ENCODE measurements at regions of chr15 and their contacts with region 1.

Region 1: GRCh38 chr15:74793135-74794028 is 11.5 kb downstream of the CSK start:
- DNase-seq: no peak
- ATAC-seq: peak; percentile 40
- H3K4me3 Mint-ChIP-seq: no peak overlapping the region
- H3K27ac Mint-ChIP-seq: no peak overlapping the region
- H3K4me1 Mint-ChIP-seq: peaks cover 31% of the 10 kb centered on the region
- H3K27me3 Mint-ChIP-seq: no peaks in the 10 kb centered on the region; the same call in 1 of the 2 replicates
- CTCF ChIP-seq: no peak

Region 2: GRCh38 chr15:74482661-74483060 is 310.7 kb before region 1 on chr15:
- CTCF ChIA-PET with region 1: no interaction called
- POLR2A ChIA-PET with region 1: no interaction called
- DNase-seq: peak; percentile 26
- ATAC-seq: peak; percentile 100
- H3K4me3 Mint-ChIP-seq: no peak overlapping the region
- H3K27ac Mint-ChIP-seq: peak overlapping the region; percentile 83
- H3K4me1 Mint-ChIP-seq: peaks cover 11% of the 10 kb centered on the region
- H3K27me3 Mint-ChIP-seq: no peaks in the 10 kb centered on the region
- CTCF ChIP-seq: no peak

Region 3: DNA sequence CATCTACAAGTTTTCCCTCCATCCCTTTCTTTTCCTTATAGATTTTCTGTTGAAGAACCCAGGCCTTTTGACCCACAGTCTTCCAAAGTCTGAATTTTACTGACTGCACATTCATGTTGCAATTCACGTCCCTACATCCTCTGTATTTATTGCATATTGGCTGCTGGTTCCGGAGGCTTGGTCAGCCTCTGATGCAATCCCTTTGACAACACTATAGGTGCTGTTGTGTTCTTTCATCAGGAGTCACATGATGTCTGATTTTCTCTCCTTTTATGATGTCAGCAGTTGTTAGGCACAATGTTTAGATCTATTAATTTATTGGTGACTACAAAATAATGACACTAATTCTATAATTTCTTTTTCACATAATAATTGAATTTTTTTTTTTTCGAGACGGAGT is 76.7 kb before region 1 on chr15:
- CTCF ChIA-PET with region 1: no interaction called
- POLR2A ChIA-PET with region 1: no interaction called
- DNase-seq: no peak
- ATAC-seq: no peak
- H3K4me3 Mint-ChIP-seq: no peak overlapping the region
- H3K27ac Mint-ChIP-seq: no peak overlapping the region
- H3K4me1 Mint-ChIP-seq: no peaks in the 10 kb centered on the region
- H3K27me3 Mint-ChIP-seq: peaks cover 15% of the 10 kb centered on the region
- CTCF ChIP-seq: no peak

Region 4: GRCh38 chr15:74781431-74782258 is 11.7 kb before region 1 on chr15 and contains the start of gene CSK:
- CTCF ChIA-PET with region 1: interaction called, 360 read pairs
- POLR2A ChIA-PET with region 1: no interaction called
- DNase-seq: peak; percentile 58
- ATAC-seq: peak; percentile 66
- H3K4me3 Mint-ChIP-seq: peak within 1 kb of the TSS; percentile 83
- H3K27ac Mint-ChIP-seq: no peak within 1 kb of the TSS
- H3K4me1 Mint-ChIP-seq: peaks cover 50% of the 10 kb centered on the region
- H3K27me3 Mint-ChIP-seq: peaks cover 26% of the 10 kb centered on the region
- CTCF ChIP-seq: peak; percentile 49; the same call in 1 of the 2 replicates
- total RNA-seq, gene CSK: 55.1 to 55.9 TPM (median 55.3 TPM) in 3 replicates

Region 5: DNA sequence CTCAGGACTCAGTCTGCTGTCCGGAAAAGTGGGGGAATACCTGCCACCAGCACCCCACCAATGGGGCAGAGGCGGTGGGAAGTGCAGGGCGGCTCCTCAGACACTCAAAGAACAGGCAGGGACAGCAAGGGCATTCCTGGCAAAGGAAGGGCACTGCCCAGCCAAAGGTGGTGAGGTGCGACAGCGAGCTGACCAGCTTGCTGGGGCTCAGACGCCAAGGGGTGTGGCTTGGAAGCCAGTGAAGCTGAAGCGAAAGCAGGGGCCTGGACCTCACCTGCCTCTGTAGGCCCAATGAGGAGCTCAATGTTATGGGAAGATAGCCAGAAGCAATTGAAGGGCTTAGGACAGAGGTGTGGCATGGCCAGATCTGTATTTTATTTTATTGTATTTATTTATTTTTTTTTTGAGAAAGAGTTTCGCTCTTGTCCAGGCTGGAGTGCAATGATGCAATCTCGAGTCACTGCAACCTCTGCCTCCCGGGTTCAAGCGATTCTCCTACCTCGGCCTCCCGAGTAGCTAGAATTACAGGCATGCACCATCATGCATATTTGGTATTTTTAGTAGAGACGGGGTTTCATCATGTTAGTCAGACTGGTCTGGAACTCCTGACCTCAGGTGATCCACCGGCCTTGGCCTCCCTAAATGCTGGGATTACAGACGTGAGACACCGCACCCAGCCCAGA is 14.8 kb after region 1 on chr15:
- CTCF ChIA-PET with region 1: interaction called, 40 read pairs
- POLR2A ChIA-PET with region 1: interaction called, 3 read pairs
- DNase-seq: no peak
- ATAC-seq: no peak
- H3K4me3 Mint-ChIP-seq: no peak overlapping the region
- H3K27ac Mint-ChIP-seq: no peak overlapping the region
- H3K4me1 Mint-ChIP-seq: peaks cover 6% of the 10 kb centered on the region
- H3K27me3 Mint-ChIP-seq: no peaks in the 10 kb centered on the region
- CTCF ChIP-seq: no peak